ENCODE measurements at regions of chr1 and their contacts with region 1.

Region 1: DNA sequence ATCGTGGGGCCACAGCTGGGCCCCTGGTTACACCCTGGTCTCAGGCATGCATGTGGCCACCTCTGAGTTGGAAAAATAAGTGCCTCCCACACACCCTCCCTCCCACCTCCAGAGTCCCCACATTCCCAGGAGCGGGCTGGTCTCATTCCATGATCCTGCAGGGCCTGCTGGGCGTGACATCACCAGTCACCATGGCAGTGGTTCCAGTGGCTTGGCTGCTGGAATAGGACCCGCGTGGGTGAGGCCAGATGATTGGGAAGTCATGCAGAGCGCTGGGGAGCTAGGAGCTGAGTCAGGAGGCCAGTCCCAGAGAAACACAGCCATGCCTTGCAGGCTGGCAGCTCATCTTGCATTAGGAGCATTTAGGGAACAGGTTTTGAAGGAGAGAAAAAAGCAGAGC is 125.4 kb upstream of the TMEM51 start:
- DNase-seq: peak; percentile 19
- H3K4me3 ChIP-seq: no peak overlapping the region
- H3K27ac ChIP-seq: no peak overlapping the region
- H3K4me1 ChIP-seq: peaks cover 15% of the 10 kb centered on the region
- H3K27me3 ChIP-seq: no peaks in the 10 kb centered on the region
- CTCF ChIP-seq: no peak
- POLR2A ChIP-seq: no peak

Region 2: GRCh38 chr1:14923727-14924452 is 104.2 kb before region 1 on chr1:
- intact Hi-C with region 1: loop called (anchors 10 kb)
- DNase-seq: peak; percentile 81
- H3K4me3 ChIP-seq: peak overlapping the region; percentile 38 to 68
- H3K27ac ChIP-seq: peak overlapping the region in 1 of 2 donors; percentile 69
- H3K4me1 ChIP-seq: peaks cover 18% of the 10 kb centered on the region
- H3K27me3 ChIP-seq: no peaks in the 10 kb centered on the region
- CTCF ChIP-seq: no peak
- POLR2A ChIP-seq: no peak

Measured in testis (tissue), 5 donors.